CD8-positive, alpha-beta T cell (primary cell): ENCODE measurements at regions of chr2 and their contacts with region 1.

Region 1: GRCh38 chr2:168687314-168687713 is 115.1 kb upstream of the NOSTRIN start:
- DNase-seq: peak in 3 of 9 experiments; percentile 11 to 39 (median 20)
- ATAC-seq: no peak
- H3K4me3 ChIP-seq: no peak overlapping the region
- H3K4me3 Mint-ChIP-seq: no peak overlapping the region
- H3K27ac ChIP-seq: no peak overlapping the region
- H3K27ac Mint-ChIP-seq: no peak overlapping the region
- H3K4me1 ChIP-seq: no peaks in the 10 kb centered on the region
- H3K4me1 Mint-ChIP-seq: peaks cover 3% of the 10 kb centered on the region
- H3K27me3 ChIP-seq: no peaks in the 10 kb centered on the region
- H3K27me3 Mint-ChIP-seq: no peaks in the 10 kb centered on the region
- CTCF ChIP-seq: peak; percentile 38

Region 2: GRCh38 chr2:167869200-167869599 is 818.1 kb before region 1 on chr2:
- CTCF ChIA-PET with region 1: no interaction called
- POLR2A ChIA-PET with region 1: no interaction called
- intact Hi-C with region 1: no loop called
- DNase-seq: no peak
- ATAC-seq: no peak
- H3K4me3 ChIP-seq: no peak overlapping the region
- H3K4me3 Mint-ChIP-seq: no peak overlapping the region
- H3K27ac ChIP-seq: no peak overlapping the region
- H3K27ac Mint-ChIP-seq: no peak overlapping the region
- H3K4me1 ChIP-seq: no peaks in the 10 kb centered on the region
- H3K4me1 Mint-ChIP-seq: no peaks in the 10 kb centered on the region
- H3K27me3 ChIP-seq: no peaks in the 10 kb centered on the region
- H3K27me3 Mint-ChIP-seq: peaks cover 2% of the 10 kb centered on the region
- CTCF ChIP-seq: no peak

Region 3: GRCh38 chr2:168669151-168669550 is 18.2 kb before region 1 on chr2:
- CTCF ChIA-PET with region 1: interaction called, 10 read pairs
- POLR2A ChIA-PET with region 1: interaction called, 5 read pairs
- intact Hi-C with region 1: no loop called
- DNase-seq: no peak
- ATAC-seq: no peak
- H3K4me3 ChIP-seq: no peak overlapping the region
- H3K4me3 Mint-ChIP-seq: no peak overlapping the region
- H3K27ac ChIP-seq: no peak overlapping the region
- H3K27ac Mint-ChIP-seq: no peak overlapping the region
- H3K4me1 ChIP-seq: peaks cover 5% of the 10 kb centered on the region
- H3K4me1 Mint-ChIP-seq: peaks cover 40% of the 10 kb centered on the region
- H3K27me3 ChIP-seq: no peaks in the 10 kb centered on the region
- H3K27me3 Mint-ChIP-seq: no peaks in the 10 kb centered on the region
- CTCF ChIP-seq: no peak